ENCODE measurements at regions of chr16 and their contacts with region 1.

Region 1: GRCh38 chr16:29784901-29785500 is 5.5 kb upstream of the KIF22 start:
- DNase-seq: peak; percentile 30 to 85 (median 69)
- ATAC-seq: peak; percentile 82 to 93 (median 90)
- H3K4me3 ChIP-seq: peak overlapping the region; percentile 26 to 29
- H3K4me3 Mint-ChIP-seq: peak overlapping the region; percentile 61 to 75 (median 68)
- H3K27ac ChIP-seq: peak overlapping the region; percentile 64
- H3K27ac Mint-ChIP-seq: peak overlapping the region; percentile 77 to 82
- H3K4me1 ChIP-seq: peaks cover 5 to 23% of the 10 kb centered on the region in 2 experiments
- H3K4me1 Mint-ChIP-seq: peaks cover 27 to 32% (median 29%) of the 10 kb centered on the region in 3 donors
- H3K27me3 ChIP-seq: peaks cover 0 to 3% of the 10 kb centered on the region in 2 experiments
- H3K27me3 Mint-ChIP-seq: no peaks in the 10 kb centered on the region

Region 2: DNA sequence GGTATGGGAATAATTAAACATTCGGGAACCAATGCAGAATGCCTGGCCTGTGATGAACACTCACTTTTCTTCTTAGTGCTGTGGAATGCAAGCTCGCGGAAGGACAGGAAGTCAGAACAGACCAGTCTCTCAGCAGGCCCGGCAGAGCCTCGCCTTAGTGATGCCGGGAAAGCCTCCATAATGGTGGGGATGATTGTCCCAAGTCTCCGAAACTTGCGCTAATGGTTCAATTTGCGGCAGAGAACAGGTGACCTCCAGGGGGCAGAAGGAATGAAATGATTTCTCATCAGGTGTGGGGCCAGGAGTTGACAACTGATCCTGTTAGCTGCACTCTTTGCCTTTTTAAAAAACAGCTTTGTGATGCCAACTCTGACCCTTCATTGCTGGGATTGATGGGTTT is 1892.1 kb before region 1 on chr16:
- CTCF ChIA-PET with region 1: no interaction called
- POLR2A ChIA-PET with region 1: no interaction called
- DNase-seq: no peak
- ATAC-seq: no peak
- H3K4me3 ChIP-seq: no peak overlapping the region
- H3K4me3 Mint-ChIP-seq: no peak overlapping the region
- H3K27ac ChIP-seq: no peak overlapping the region
- H3K27ac Mint-ChIP-seq: no peak overlapping the region
- H3K4me1 ChIP-seq: no peaks in the 10 kb centered on the region
- H3K4me1 Mint-ChIP-seq: no peaks in the 10 kb centered on the region
- H3K27me3 ChIP-seq: peaks cover 0 to 51% of the 10 kb centered on the region in 2 experiments
- H3K27me3 Mint-ChIP-seq: peaks cover 25 to 47% of the 10 kb centered on the region in 2 donors

Region 3: GRCh38 chr16:29710227-29711219 is 74.5 kb before region 1 on chr16:
- CTCF ChIA-PET with region 1: interaction called in 1 of 2 experiments, 10 read pairs
- POLR2A ChIA-PET with region 1: no interaction called
- DNase-seq: peak in 23 of 35 experiments; percentile 10 to 82 (median 33)
- ATAC-seq: peak; percentile 98 to 99 (median 98)
- H3K4me3 ChIP-seq: no peak overlapping the region
- H3K4me3 Mint-ChIP-seq: no peak overlapping the region
- H3K27ac ChIP-seq: no peak overlapping the region
- H3K27ac Mint-ChIP-seq: peak overlapping the region; percentile 55 to 59
- H3K4me1 ChIP-seq: peaks cover 2 to 7% of the 10 kb centered on the region in 2 experiments
- H3K4me1 Mint-ChIP-seq: peaks cover 12 to 14% (median 13%) of the 10 kb centered on the region in 3 donors
- H3K27me3 ChIP-seq: no peaks in the 10 kb centered on the region
- H3K27me3 Mint-ChIP-seq: no peaks in the 10 kb centered on the region

Region 4: GRCh38 chr16:29738514-29738913 is 46.5 kb before region 1 on chr16:
- CTCF ChIA-PET with region 1: interaction called, 6 to 11 read pairs
- POLR2A ChIA-PET with region 1: interaction called, 10 to 14 read pairs
- DNase-seq: peak in 33 of 35 experiments; percentile 40 to 89 (median 66)
- ATAC-seq: peak; percentile 89 to 95 (median 90)
- H3K4me3 ChIP-seq: no peak overlapping the region
- H3K4me3 Mint-ChIP-seq: peak overlapping the region; percentile 37 to 73 (median 66)
- H3K27ac ChIP-seq: peak overlapping the region; percentile 70
- H3K27ac Mint-ChIP-seq: peak overlapping the region; percentile 92 to 93
- H3K4me1 ChIP-seq: peaks cover 54 to 72% of the 10 kb centered on the region in 2 experiments
- H3K4me1 Mint-ChIP-seq: peaks cover 82 to 86% (median 85%) of the 10 kb centered on the region in 3 donors
- H3K27me3 ChIP-seq: no peaks in the 10 kb centered on the region
- H3K27me3 Mint-ChIP-seq: no peaks in the 10 kb centered on the region

Region 5: DNA sequence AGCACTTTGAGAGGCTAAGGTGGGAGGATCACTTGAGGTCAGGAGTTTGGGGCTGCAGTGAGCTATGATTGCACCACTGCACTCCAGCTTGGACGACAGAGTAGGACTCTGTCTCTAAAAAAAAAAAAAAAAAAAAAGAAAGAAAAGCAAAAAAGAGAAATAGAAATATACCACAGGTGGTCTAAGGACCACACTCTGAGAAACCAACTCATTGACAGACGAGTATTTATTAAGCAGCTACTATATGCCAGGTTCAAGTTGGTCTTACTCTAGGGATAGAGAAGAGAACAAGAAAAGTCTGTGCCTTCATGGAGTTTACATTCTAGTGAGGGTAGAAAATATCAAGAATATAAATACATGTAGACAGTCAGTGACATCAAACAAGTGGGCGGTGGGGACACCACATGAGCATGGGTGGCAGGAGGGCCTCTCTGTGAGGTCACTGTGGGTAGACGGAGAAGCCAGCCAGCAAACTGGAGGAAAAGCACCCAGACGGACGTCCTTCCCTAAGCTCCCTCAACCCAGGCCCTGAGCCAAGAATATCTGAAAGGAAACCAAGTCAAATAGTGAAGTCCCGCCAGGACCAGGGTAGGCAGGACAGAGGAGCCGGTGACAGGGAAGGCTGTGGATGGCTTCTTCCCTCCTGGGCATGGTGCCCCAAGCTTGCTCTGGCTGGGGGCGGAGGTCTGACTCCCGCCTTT is 73.3 kb after region 1 on chr16:
- CTCF ChIA-PET with region 1: no interaction called
- POLR2A ChIA-PET with region 1: interaction called in 1 of 2 experiments, 15 read pairs
- DNase-seq: no peak
- ATAC-seq: no peak
- H3K4me3 ChIP-seq: no peak overlapping the region
- H3K4me3 Mint-ChIP-seq: no peak overlapping the region
- H3K27ac ChIP-seq: no peak overlapping the region
- H3K27ac Mint-ChIP-seq: no peak overlapping the region
- H3K4me1 ChIP-seq: peaks cover 5 to 25% of the 10 kb centered on the region in 2 experiments
- H3K4me1 Mint-ChIP-seq: peaks cover 20 to 28% (median 22%) of the 10 kb centered on the region in 3 donors
- H3K27me3 ChIP-seq: no peaks in the 10 kb centered on the region
- H3K27me3 Mint-ChIP-seq: no peaks in the 10 kb centered on the region